ENCODE measurements at regions of chr5 and their contacts with region 1.

Region 1: GRCh38 chr5:180523629-180524466 is 29.7 kb downstream of the CNOT6 start:
- DNase-seq: no peak
- ATAC-seq: no peak
- H3K4me3 ChIP-seq: no peak overlapping the region
- H3K4me3 Mint-ChIP-seq: no peak overlapping the region
- H3K27ac ChIP-seq: no peak overlapping the region
- H3K27ac Mint-ChIP-seq: peak overlapping the region; percentile 25
- H3K4me1 ChIP-seq: peaks cover 10% of the 10 kb centered on the region
- H3K4me1 Mint-ChIP-seq: peaks cover 71% of the 10 kb centered on the region
- H3K27me3 ChIP-seq: no peaks in the 10 kb centered on the region
- H3K27me3 Mint-ChIP-seq: no peaks in the 10 kb centered on the region
- CTCF ChIP-seq: no peak

Region 2: GRCh38 chr5:180507661-180508060 is 16.2 kb before region 1 on chr5:
- CTCF ChIA-PET with region 1: no interaction called
- POLR2A ChIA-PET with region 1: no interaction called
- intact Hi-C with region 1: no loop called
- DNase-seq: no peak
- ATAC-seq: no peak
- H3K4me3 ChIP-seq: no peak overlapping the region
- H3K4me3 Mint-ChIP-seq: no peak overlapping the region
- H3K27ac ChIP-seq: no peak overlapping the region
- H3K27ac Mint-ChIP-seq: no peak overlapping the region
- H3K4me1 ChIP-seq: peaks cover 6% of the 10 kb centered on the region
- H3K4me1 Mint-ChIP-seq: peaks cover 53% of the 10 kb centered on the region
- H3K27me3 ChIP-seq: no peaks in the 10 kb centered on the region
- H3K27me3 Mint-ChIP-seq: no peaks in the 10 kb centered on the region
- CTCF ChIP-seq: no peak

Region 3: GRCh38 chr5:180540050-180540694 is 16.3 kb after region 1 on chr5:
- CTCF ChIA-PET with region 1: no interaction called
- POLR2A ChIA-PET with region 1: no interaction called
- intact Hi-C with region 1: no loop called
- DNase-seq: no peak
- ATAC-seq: no peak
- H3K4me3 ChIP-seq: no peak overlapping the region
- H3K4me3 Mint-ChIP-seq: no peak overlapping the region
- H3K27ac ChIP-seq: no peak overlapping the region
- H3K27ac Mint-ChIP-seq: no peak overlapping the region
- H3K4me1 ChIP-seq: no peaks in the 10 kb centered on the region
- H3K4me1 Mint-ChIP-seq: peaks cover 8% of the 10 kb centered on the region
- H3K27me3 ChIP-seq: no peaks in the 10 kb centered on the region
- H3K27me3 Mint-ChIP-seq: no peaks in the 10 kb centered on the region
- CTCF ChIP-seq: no peak

Region 4: DNA sequence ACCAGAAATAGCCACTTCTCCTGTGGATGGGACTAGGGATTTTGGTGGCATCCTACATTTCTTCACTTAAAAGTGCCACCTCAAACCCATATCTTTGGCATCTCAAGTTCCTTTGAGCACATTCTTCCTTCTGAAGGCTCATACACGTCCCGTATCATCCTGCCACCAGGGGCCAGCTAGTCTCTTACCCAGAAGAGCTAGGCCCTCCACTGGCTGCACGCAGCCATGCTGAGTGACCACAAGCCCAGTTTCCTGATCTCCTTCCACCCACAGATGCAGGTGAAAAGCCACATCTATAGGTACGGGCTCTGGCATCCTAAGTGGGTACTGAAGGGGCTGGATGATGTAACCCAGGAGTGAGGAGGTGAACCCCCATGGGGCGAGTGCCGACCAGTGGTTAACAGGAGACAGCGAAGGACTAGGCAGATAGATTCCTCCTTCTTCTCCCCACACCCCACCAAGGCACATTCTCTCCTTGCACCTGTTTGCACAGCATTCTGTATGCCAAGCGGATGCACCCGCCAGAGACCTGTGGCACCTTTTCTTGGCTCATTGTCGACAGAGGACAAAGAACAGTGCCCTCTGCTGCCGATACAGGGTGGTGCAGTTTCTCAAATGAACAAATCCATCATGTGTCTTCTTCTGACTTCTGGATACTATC is 81.8 kb after region 1 on chr5:
- CTCF ChIA-PET with region 1: no interaction called
- POLR2A ChIA-PET with region 1: no interaction called
- intact Hi-C with region 1: loop called in 1 of 2 experiments (anchors 1 kb)
- DNase-seq: peak; percentile 34 to 73 (median 50)
- ATAC-seq: peak; percentile 61
- H3K4me3 ChIP-seq: no peak overlapping the region
- H3K4me3 Mint-ChIP-seq: no peak overlapping the region
- H3K27ac ChIP-seq: no peak overlapping the region
- H3K27ac Mint-ChIP-seq: no peak overlapping the region
- H3K4me1 ChIP-seq: no peaks in the 10 kb centered on the region
- H3K4me1 Mint-ChIP-seq: no peaks in the 10 kb centered on the region
- H3K27me3 ChIP-seq: no peaks in the 10 kb centered on the region
- H3K27me3 Mint-ChIP-seq: no peaks in the 10 kb centered on the region
- CTCF ChIP-seq: peak; percentile 78

Region 5: GRCh38 chr5:180668835-180669596 is 145.2 kb after region 1 on chr5:
- CTCF ChIA-PET with region 1: no interaction called
- POLR2A ChIA-PET with region 1: no interaction called
- intact Hi-C with region 1: loop called in 1 of 2 experiments (anchors 10 kb)
- DNase-seq: no peak
- ATAC-seq: no peak
- H3K4me3 ChIP-seq: no peak overlapping the region
- H3K4me3 Mint-ChIP-seq: no peak overlapping the region
- H3K27ac ChIP-seq: no peak overlapping the region
- H3K27ac Mint-ChIP-seq: no peak overlapping the region
- H3K4me1 ChIP-seq: peaks cover 13% of the 10 kb centered on the region
- H3K4me1 Mint-ChIP-seq: peaks cover 17% of the 10 kb centered on the region
- H3K27me3 ChIP-seq: peaks cover 0 to 6% of the 10 kb centered on the region in 2 experiments
- H3K27me3 Mint-ChIP-seq: no peaks in the 10 kb centered on the region
- CTCF ChIP-seq: no peak

Measured in CD4-positive, alpha-beta T cell (primary cell).